GM10248 (cell line): ENCODE measurements at regions of chr1 and their contacts with region 1.

Region 1: GRCh38 chr1:165827268-165828102 is at the start of gene UCK2:
- DNase-seq: peak; percentile 89
- CTCF ChIP-seq: peak; percentile 34

Region 2: GRCh38 chr1:165842671-165843129 is 15.2 kb after region 1 on chr1:
- CTCF ChIA-PET with region 1: interaction called, 67 read pairs
- POLR2A ChIA-PET with region 1: interaction called, 3 read pairs
- DNase-seq: no peak
- CTCF ChIP-seq: no peak

Region 3: GRCh38 chr1:165849353-165850133 is 22.1 kb after region 1 on chr1:
- CTCF ChIA-PET with region 1: interaction called, 67 read pairs
- POLR2A ChIA-PET with region 1: no interaction called
- DNase-seq: no peak
- CTCF ChIP-seq: no peak

Region 4: GRCh38 chr1:165928075-165928731 is 100.7 kb after region 1 on chr1:
- CTCF ChIA-PET with region 1: no interaction called
- POLR2A ChIA-PET with region 1: no interaction called
- DNase-seq: peak; percentile 74
- CTCF ChIP-seq: peak; percentile 65

Region 5: DNA sequence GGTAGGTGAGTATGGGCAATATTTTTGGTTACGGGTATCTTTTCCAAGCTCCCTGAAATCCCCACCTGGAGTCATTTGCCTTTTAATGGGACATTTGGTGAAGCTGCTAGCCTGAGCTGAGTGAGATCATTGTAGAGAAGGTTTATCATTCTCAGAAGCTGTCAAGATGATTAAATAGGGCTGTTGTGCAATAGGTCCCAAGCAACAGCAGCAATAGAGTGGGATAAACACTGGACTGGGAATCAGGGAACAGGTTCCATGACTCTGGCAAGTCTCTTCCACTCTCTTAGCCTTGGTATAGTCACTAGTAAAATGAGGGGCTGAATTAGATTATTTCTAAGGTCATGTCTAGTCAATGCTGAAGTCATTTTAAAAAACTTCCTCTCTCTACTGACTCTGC is 369.7 kb after region 1 on chr1:
- CTCF ChIA-PET with region 1: no interaction called
- POLR2A ChIA-PET with region 1: no interaction called
- DNase-seq: no peak
- CTCF ChIP-seq: no peak